Right ventricle myocardium superior (tissue), 1 donor: ENCODE measurements at regions of chr13 and their contacts with region 1.

Region 1: GRCh38 chr13:51286135-51287002 is 53.1 kb upstream of the SERPINE3 start:
- DNase-seq: peak; percentile 89
- ATAC-seq: peak; percentile 79

Region 2: DNA sequence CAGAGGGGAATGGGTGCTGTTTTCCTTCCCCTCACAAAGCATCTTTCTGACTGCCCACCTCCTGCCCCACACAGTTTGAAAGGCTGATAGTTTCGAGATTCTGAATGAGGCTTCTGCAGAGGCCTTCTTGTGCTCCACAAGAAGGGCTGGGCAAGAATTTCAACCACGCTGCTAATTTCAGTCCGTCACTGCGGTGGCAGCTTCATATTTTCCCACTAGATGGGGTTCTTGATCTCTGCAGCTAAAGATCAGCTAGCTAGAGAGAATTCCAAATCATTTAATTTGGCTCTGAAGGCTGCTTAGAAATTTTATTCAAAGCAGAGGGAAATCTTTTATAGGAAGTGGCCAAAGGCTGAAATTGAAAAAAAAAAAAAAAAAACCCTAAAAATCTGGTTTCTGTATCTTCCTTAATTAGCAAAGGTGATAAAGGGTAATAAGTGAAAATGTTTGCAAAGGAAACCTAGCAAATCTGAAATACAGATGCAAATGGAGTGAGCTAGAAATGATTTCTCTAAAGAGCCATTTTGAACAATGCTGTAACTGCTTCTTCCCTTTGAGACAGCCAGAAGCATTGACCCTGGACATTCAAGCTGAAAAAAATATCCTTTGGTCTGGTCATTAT is 137.3 kb before region 1 on chr13:
- intact Hi-C with region 1: loop called (anchors 2 kb)
- DNase-seq: no peak
- ATAC-seq: peak; percentile 75

Region 3: GRCh38 chr13:51202477-51203046 is 83.8 kb before region 1 on chr13:
- intact Hi-C with region 1: no loop called
- DNase-seq: no peak
- ATAC-seq: no peak

Region 4: DNA sequence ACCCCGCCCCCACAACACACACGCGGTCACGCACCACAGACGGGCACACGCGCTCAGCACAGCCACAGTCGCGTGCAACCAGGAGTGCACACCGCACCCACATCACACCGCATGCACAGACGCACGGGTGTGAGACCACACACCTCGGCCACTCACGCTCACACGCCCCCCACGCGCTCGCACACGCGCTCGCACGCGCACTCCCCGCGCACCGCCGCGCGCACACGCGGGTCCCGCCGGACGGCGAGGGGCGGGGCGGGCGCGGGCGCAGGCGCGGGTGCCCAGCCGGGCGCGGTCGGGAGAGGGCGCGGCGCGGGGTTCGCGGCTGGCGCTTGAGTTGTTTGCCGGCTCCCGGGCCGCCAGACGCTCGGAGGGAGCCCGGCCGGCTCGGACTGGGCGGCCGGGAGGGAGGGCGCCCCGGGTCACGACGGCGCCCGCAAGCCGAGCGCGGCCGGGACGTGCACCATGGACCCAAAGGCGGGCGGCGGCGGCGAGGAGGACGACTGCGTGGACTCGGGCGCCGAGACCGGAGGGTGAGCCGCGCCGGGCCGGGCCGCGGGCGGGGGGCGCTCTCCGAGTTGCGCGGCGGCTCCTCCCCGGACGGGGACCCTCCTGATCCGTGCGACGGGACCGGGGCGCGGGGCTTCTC is 64.2 kb before region 1 on chr13 and contains the start of gene FAM124A:
- intact Hi-C with region 1: loop called (anchors 2 kb)
- DNase-seq: peak; percentile 70
- ATAC-seq: peak; percentile 92
- total RNA-seq, gene FAM124A: 12.2 TPM

Region 5: GRCh38 chr13:51249770-51250741 is 36.3 kb before region 1 on chr13:
- intact Hi-C with region 1: loop called (anchors 5 kb)
- DNase-seq: no peak
- ATAC-seq: no peak